Natural killer cell (primary cell): ENCODE measurements at regions of chr12 and their contacts with region 1.

Region 1: GRCh38 chr12:6211421-6211869 is 11.2 kb downstream of the CD9 start:
- DNase-seq: no peak
- ATAC-seq: no peak
- H3K4me3 ChIP-seq: no peak overlapping the region
- H3K4me3 Mint-ChIP-seq: no peak overlapping the region
- H3K27ac ChIP-seq: no peak overlapping the region
- H3K27ac Mint-ChIP-seq: no peak overlapping the region
- H3K4me1 ChIP-seq: no peaks in the 10 kb centered on the region
- H3K4me1 Mint-ChIP-seq: no peaks in the 10 kb centered on the region
- H3K27me3 ChIP-seq: no peaks in the 10 kb centered on the region
- H3K27me3 Mint-ChIP-seq: peaks cover 0 to 3% of the 10 kb centered on the region in 2 donors
- CTCF ChIP-seq: no peak

Region 2: DNA sequence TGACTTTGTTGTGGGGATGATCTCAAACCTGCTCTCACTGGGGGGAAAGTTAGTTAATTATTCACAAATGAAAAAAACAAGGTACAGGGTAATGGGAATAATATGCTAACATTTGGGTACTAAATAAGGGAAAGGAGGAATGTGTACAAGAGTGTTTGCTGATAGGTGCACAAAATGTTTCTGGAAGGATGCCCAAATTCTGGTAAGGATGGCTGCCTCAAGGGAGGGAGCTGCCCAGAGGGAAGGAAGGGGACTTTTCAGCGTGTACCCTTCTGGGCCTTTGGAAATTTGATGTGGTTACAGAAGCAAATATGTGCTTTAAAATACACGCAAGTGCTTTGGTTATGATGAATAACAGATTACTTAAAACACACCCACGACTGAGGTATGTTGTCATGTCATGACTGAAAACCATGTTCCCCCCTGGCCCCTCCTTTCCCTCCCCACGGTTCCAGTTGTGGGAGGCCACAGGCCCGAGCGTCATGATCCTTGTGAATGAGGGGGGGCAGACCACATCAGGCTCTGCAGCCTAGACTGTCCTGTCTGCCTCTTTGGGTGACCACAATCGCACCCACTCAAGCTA is 55.8 kb after region 1 on chr12:
- intact Hi-C with region 1: loop called (anchors 5 kb)
- DNase-seq: no peak
- ATAC-seq: peak in 2 of 3 donors; percentile 29 to 45
- H3K4me3 ChIP-seq: no peak overlapping the region
- H3K4me3 Mint-ChIP-seq: no peak overlapping the region
- H3K27ac ChIP-seq: no peak overlapping the region
- H3K27ac Mint-ChIP-seq: no peak overlapping the region
- H3K4me1 ChIP-seq: no peaks in the 10 kb centered on the region
- H3K4me1 Mint-ChIP-seq: peaks cover 0 to 4% of the 10 kb centered on the region in 2 donors
- H3K27me3 ChIP-seq: no peaks in the 10 kb centered on the region
- H3K27me3 Mint-ChIP-seq: peaks cover 0 to 5% of the 10 kb centered on the region in 2 donors
- CTCF ChIP-seq: no peak